ENCODE measurements at regions of chr11 and their contacts with region 1.

Region 1: GRCh38 chr11:131331546-131331945 is 38.9 kb upstream of the NTM start:
- DNase-seq: no peak
- H3K4me3 ChIP-seq: no peak overlapping the region
- H3K27ac ChIP-seq: no peak overlapping the region
- H3K4me1 ChIP-seq: no peaks in the 10 kb centered on the region
- H3K27me3 ChIP-seq: no peaks in the 10 kb centered on the region
- CTCF ChIP-seq: no peak
- EP300 ChIP-seq: no peak
- POLR2A ChIP-seq: no peak

Region 2: GRCh38 chr11:131302831-131303230 is 28.7 kb before region 1 on chr11:
- in situ Hi-C with region 1: no loop called
- intact Hi-C with region 1: loop called (anchors 1 kb)
- DNase-seq: no peak
- H3K4me3 ChIP-seq: no peak overlapping the region
- H3K27ac ChIP-seq: no peak overlapping the region
- H3K4me1 ChIP-seq: no peaks in the 10 kb centered on the region
- H3K27me3 ChIP-seq: no peaks in the 10 kb centered on the region
- CTCF ChIP-seq: no peak
- EP300 ChIP-seq: no peak
- POLR2A ChIP-seq: no peak